ENCODE measurements at regions of chr18 and their contacts with region 1.

Region 1: GRCh38 chr18:44594799-44595467 is 85.8 kb upstream of the SETBP1 start:
- DNase-seq: no peak
- H3K4me3 ChIP-seq: no peak overlapping the region
- H3K27ac ChIP-seq: no peak overlapping the region
- H3K4me1 ChIP-seq: no peaks in the 10 kb centered on the region
- H3K27me3 ChIP-seq: no peaks in the 10 kb centered on the region
- CTCF ChIP-seq: no peak
- POLR2A ChIP-seq: no peak

Region 2: DNA sequence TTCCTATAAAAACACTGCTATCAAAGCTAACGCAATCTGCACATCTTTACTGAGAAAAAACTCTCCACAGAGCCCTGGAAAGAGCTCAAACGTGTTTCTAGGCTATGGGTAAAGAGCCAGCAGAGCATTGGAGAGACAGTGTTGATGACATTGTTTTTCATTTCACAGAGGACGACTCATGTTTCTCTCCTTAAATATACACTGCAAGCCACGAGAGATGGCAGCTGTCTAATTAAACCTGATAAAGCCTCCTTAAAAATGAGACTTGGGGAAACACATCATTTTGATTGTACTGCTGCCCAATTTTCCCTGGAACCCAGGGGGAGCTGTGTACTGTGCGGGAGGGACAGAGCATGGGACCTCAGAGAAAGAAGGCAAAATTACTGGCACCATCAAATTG is 208.5 kb before region 1 on chr18:
- intact Hi-C with region 1: loop called (anchors 10 kb)
- DNase-seq: no peak
- H3K4me3 ChIP-seq: no peak overlapping the region
- H3K27ac ChIP-seq: no peak overlapping the region
- H3K4me1 ChIP-seq: peaks cover 8% of the 10 kb centered on the region
- H3K27me3 ChIP-seq: no peaks in the 10 kb centered on the region
- CTCF ChIP-seq: no peak
- POLR2A ChIP-seq: no peak

Region 3: DNA sequence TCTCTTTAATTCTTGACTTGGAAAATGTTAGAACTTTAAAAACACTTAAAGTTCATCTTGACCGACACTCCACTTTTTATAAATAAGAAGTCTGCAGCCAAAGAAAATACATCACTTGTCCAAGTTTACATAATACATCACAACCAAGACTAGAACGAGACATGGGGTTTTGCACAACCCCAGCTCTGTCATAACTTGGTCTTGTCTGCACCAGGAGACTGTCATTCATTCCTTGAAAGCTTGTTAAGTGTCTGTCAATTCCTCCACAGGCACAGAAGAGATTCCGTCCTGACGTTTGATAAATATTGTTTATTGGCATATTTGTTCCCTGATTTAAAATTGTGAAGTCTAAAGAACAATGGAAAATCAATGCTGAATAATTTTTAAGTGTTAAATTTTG is 53.8 kb before region 1 on chr18:
- intact Hi-C with region 1: no loop called
- DNase-seq: no peak
- H3K4me3 ChIP-seq: no peak overlapping the region
- H3K27ac ChIP-seq: no peak overlapping the region
- H3K4me1 ChIP-seq: no peaks in the 10 kb centered on the region
- H3K27me3 ChIP-seq: no peaks in the 10 kb centered on the region
- CTCF ChIP-seq: no peak
- POLR2A ChIP-seq: no peak

Region 4: GRCh38 chr18:44715245-44715644 is 120.3 kb after region 1 on chr18:
- intact Hi-C with region 1: no loop called
- DNase-seq: peak; percentile 68
- H3K4me3 ChIP-seq: no peak overlapping the region
- H3K27ac ChIP-seq: peak overlapping the region; percentile 60 to 76
- H3K4me1 ChIP-seq: peaks cover 11% of the 10 kb centered on the region
- H3K27me3 ChIP-seq: no peaks in the 10 kb centered on the region
- CTCF ChIP-seq: no peak
- POLR2A ChIP-seq: no peak

Measured in prostate gland (tissue), 2 donors.